CD4-positive, alpha-beta memory T cell (primary cell): ENCODE measurements at regions of chr7 and their contacts with region 1.

Region 1: GRCh38 chr7:2508327-2509215 is 11.0 kb upstream of the LFNG start:
- DNase-seq: peak; percentile 85 to 96 (median 90)
- H3K4me3 ChIP-seq: peak overlapping the region; percentile 31 to 39
- H3K4me3 Mint-ChIP-seq: peak overlapping the region; percentile 74 to 87 (median 81)
- H3K27ac ChIP-seq: peak overlapping the region; percentile 73
- H3K27ac Mint-ChIP-seq: peak overlapping the region; percentile 95 to 99 (median 98)
- H3K4me1 ChIP-seq: peaks cover 61% of the 10 kb centered on the region
- H3K4me1 Mint-ChIP-seq: peaks cover 29 to 63% (median 50%) of the 10 kb centered on the region in 4 donors
- H3K27me3 ChIP-seq: no peaks in the 10 kb centered on the region
- H3K27me3 Mint-ChIP-seq: no peaks in the 10 kb centered on the region

Region 2: DNA sequence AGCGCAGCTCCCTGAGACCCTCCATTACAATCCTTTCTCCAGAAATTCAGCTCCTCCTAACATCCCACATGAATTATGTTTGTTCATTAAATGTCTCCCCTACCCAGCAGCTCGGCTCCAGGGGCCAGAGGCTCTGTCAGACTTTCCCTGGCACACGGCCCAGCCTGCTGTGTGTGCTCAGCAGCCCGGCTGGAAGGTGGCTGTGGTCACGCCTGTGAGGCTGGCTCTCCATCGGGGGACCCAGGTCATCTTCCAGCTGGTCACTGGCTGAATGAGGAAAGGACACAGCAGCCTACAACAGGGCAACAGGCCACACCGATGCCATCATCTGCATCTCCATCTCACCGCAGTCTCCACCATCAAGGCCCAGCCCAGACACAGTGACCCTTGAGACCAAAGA is 495.6 kb before region 1 on chr7:
- CTCF ChIA-PET with region 1: no interaction called
- POLR2A ChIA-PET with region 1: no interaction called
- intact Hi-C with region 1: no loop called
- DNase-seq: no peak
- H3K4me3 ChIP-seq: no peak overlapping the region
- H3K4me3 Mint-ChIP-seq: no peak overlapping the region
- H3K27ac ChIP-seq: no peak overlapping the region
- H3K27ac Mint-ChIP-seq: no peak overlapping the region
- H3K4me1 ChIP-seq: no peaks in the 10 kb centered on the region
- H3K4me1 Mint-ChIP-seq: peaks cover 0 to 3% (median under 1%) of the 10 kb centered on the region in 4 donors
- H3K27me3 ChIP-seq: no peaks in the 10 kb centered on the region
- H3K27me3 Mint-ChIP-seq: no peaks in the 10 kb centered on the region

Region 3: DNA sequence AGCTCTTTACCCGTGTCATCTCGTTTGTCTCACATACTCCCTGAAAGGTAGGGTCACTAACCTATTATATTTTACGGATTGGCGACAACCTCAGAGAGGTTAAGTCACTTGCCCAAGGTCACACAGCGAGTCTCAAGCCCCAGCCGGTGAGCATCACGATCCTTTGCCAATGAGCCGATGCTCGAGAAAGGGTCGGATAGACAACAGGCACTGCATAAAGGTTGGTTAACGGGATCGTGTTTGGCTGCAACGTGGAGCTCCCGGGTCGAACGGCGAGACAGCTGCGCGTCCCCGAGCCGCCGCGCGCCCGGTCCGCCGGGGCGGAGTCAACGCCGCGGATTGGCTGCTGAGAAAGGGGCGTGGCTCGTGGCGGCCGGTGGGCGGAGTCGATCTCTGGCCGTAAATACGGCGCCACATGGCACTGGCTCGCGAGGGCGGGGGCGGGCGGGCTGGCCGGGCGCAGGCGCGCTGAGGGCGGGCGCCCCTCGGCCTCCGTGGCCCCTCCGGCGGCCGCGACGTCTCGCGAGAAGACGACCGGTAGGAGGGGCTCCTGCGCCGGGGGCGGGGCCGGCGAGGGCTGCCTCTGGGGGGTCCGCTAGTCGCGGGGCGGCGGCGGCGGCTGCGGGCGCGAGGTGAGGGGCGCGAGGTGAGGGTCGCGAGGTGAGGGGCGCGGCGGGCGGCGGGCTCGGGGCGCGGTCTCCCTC is 105.4 kb before region 1 on chr7 and contains the start of gene CHST12:
- CTCF ChIA-PET with region 1: no interaction called
- POLR2A ChIA-PET with region 1: interaction called, 7 read pairs
- intact Hi-C with region 1: loop called (anchors 5 kb)
- DNase-seq: peak; percentile 93 to 94 (median 93)
- H3K4me3 ChIP-seq: peak within 1 kb of the TSS; percentile 80 to 91
- H3K4me3 Mint-ChIP-seq: peak within 1 kb of the TSS; percentile 87 to 96 (median 90)
- H3K27ac ChIP-seq: peak within 1 kb of the TSS; percentile 70
- H3K27ac Mint-ChIP-seq: peak within 1 kb of the TSS; percentile 90 to 96 (median 92)
- H3K4me1 ChIP-seq: peaks cover 53% of the 10 kb centered on the region
- H3K4me1 Mint-ChIP-seq: peaks cover 37 to 64% (median 47%) of the 10 kb centered on the region in 4 donors
- H3K27me3 ChIP-seq: no peaks in the 10 kb centered on the region
- H3K27me3 Mint-ChIP-seq: no peaks in the 10 kb centered on the region
- total RNA-seq, gene CHST12: 29.5 to 30.7 TPM

Region 4: GRCh38 chr7:2460188-2460587 is 48.4 kb before region 1 on chr7:
- CTCF ChIA-PET with region 1: no interaction called
- POLR2A ChIA-PET with region 1: no interaction called
- intact Hi-C with region 1: no loop called
- DNase-seq: no peak
- H3K4me3 ChIP-seq: no peak overlapping the region
- H3K4me3 Mint-ChIP-seq: no peak overlapping the region
- H3K27ac ChIP-seq: no peak overlapping the region
- H3K27ac Mint-ChIP-seq: no peak overlapping the region
- H3K4me1 ChIP-seq: peaks cover 8% of the 10 kb centered on the region
- H3K4me1 Mint-ChIP-seq: peaks cover 3 to 9% (median 7%) of the 10 kb centered on the region in 4 donors
- H3K27me3 ChIP-seq: no peaks in the 10 kb centered on the region
- H3K27me3 Mint-ChIP-seq: peaks cover 0 to 4% of the 10 kb centered on the region in 2 donors

Region 5: GRCh38 chr7:2497500-2498336 is 10.9 kb before region 1 on chr7:
- CTCF ChIA-PET with region 1: interaction called, 4 read pairs
- POLR2A ChIA-PET with region 1: interaction called, 27 read pairs
- intact Hi-C with region 1: no loop called
- DNase-seq: peak in 1 of 5 donors; percentile 16
- H3K4me3 ChIP-seq: no peak overlapping the region
- H3K4me3 Mint-ChIP-seq: no peak overlapping the region
- H3K27ac ChIP-seq: no peak overlapping the region
- H3K27ac Mint-ChIP-seq: no peak overlapping the region
- H3K4me1 ChIP-seq: no peaks in the 10 kb centered on the region
- H3K4me1 Mint-ChIP-seq: peaks cover 0 to 1% (median 0%) of the 10 kb centered on the region in 4 donors
- H3K27me3 ChIP-seq: no peaks in the 10 kb centered on the region
- H3K27me3 Mint-ChIP-seq: peaks cover 0 to 3% of the 10 kb centered on the region in 2 donors

Region 6: GRCh38 chr7:2529161-2530070 is 20.8 kb after region 1 on chr7:
- CTCF ChIA-PET with region 1: interaction called, 29 read pairs
- POLR2A ChIA-PET with region 1: interaction called, 511 read pairs
- intact Hi-C with region 1: loop called (anchors 1 kb)
- DNase-seq: peak; percentile 41 to 84 (median 54)
- H3K4me3 ChIP-seq: peak overlapping the region in 1 of 2 donors; percentile 50
- H3K4me3 Mint-ChIP-seq: peak overlapping the region; percentile 71 to 91 (median 80)
- H3K27ac ChIP-seq: peak overlapping the region; percentile 83
- H3K27ac Mint-ChIP-seq: peak overlapping the region; percentile 84 to 99 (median 93)
- H3K4me1 ChIP-seq: peaks cover 69% of the 10 kb centered on the region
- H3K4me1 Mint-ChIP-seq: peaks cover 19 to 65% (median 48%) of the 10 kb centered on the region in 4 donors
- H3K27me3 ChIP-seq: no peaks in the 10 kb centered on the region
- H3K27me3 Mint-ChIP-seq: no peaks in the 10 kb centered on the region

Region 7: DNA sequence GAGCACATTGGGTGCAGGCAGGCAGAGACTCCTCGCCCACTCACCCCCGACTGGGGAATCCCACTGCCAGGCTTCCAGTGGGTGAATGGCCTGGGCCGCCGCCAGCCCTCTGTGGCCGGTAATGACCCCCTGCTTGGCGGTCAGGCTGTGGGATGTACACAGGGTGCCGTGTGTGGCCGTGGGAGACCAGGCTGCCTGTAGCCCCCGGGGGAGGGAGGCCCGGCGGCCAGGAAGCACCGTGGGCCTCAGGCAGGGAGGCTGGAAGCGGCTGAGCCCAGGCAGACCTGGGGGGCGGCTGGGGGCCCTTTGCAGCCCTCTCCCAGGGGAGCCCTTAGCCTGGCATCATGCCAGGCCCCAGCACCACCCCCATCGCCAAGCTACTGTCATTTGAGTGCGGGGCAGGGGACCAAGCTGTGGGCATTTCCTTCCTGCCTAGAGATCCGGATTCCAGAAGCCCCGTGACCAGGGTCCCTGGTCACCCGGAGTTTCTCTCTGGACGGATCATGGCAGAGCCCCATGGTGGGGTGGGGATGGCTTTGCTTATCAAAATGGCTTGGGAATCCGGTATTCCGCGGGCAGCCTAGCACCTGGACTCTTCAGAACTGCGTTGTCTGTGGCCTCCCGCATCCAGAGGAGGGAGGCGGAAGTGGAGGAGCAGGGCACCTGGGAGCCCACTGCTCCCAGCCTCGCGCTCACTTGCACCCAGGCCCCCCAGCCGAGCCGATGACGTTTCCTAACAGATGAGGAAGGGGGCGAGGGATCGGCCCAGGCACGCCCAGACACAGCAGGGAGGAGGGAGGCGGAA is 124.4 kb after region 1 on chr7:
- CTCF ChIA-PET with region 1: no interaction called
- POLR2A ChIA-PET with region 1: interaction called, 3 read pairs
- intact Hi-C with region 1: loop called (anchors 1 kb)
- DNase-seq: peak in 4 of 5 donors; percentile 15 to 19 (median 18)
- H3K4me3 ChIP-seq: peak overlapping the region; percentile 52 to 82
- H3K4me3 Mint-ChIP-seq: peak overlapping the region; percentile 81 to 89 (median 84)
- H3K27ac ChIP-seq: peak overlapping the region; percentile 63
- H3K27ac Mint-ChIP-seq: peak overlapping the region; percentile 44 to 82 (median 75)
- H3K4me1 ChIP-seq: peaks cover 27% of the 10 kb centered on the region
- H3K4me1 Mint-ChIP-seq: peaks cover 2 to 21% (median 15%) of the 10 kb centered on the region in 4 donors
- H3K27me3 ChIP-seq: no peaks in the 10 kb centered on the region
- H3K27me3 Mint-ChIP-seq: peaks cover 0 to under 1% of the 10 kb centered on the region in 2 donors